ENCODE measurements at regions of chr2 and their contacts with region 1.

Region 1: DNA sequence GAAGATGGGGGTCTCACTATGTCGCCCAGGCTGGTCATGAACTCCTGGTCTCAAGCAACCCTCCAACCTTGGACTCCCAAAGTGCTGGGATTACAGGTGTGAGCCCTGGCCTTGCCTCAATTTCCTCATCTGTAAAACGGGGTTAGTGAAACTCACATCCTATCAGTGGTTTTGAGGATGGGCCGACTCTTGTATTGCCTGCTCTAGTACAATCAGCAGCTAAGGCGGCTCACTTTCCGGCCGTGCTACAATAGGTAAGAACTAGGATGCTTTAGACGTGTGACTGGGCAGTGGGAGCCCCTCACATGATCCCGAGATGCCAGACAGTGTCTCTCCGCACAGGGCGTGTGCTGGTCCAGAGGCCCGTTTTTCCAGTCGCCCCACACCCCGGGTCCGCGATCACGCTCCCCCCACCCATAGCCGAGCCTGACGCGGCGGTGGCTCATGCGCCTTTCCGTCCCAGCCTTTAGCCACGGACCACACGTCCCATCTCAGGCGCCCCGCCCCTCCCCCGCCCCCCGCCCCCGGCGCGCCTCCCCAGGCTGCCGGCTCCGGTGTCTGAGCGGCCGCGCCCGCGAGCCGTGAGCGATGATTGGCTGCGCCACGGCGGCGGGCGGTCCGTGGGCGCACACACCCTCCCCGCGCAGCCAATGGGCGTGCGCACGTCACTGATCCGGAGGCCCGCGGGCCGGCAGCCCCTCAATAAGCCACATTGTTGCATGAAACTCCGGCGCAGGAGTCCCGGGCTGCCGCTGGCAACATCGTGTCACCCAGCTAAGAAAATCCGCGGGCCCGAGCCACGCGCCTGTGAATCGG is at the start of gene HK2:
- DNase-seq: peak; percentile 85
- H3K4me3 Mint-ChIP-seq: peak within 1 kb of the TSS; percentile 96
- H3K27ac Mint-ChIP-seq: peak within 1 kb of the TSS; percentile 96
- H3K4me1 Mint-ChIP-seq: peaks cover 58% of the 10 kb centered on the region
- H3K27me3 Mint-ChIP-seq: peaks cover 3% of the 10 kb centered on the region
- total RNA-seq, gene HK2: 92.2 and 94.5 TPM in 2 replicates

Region 2: DNA sequence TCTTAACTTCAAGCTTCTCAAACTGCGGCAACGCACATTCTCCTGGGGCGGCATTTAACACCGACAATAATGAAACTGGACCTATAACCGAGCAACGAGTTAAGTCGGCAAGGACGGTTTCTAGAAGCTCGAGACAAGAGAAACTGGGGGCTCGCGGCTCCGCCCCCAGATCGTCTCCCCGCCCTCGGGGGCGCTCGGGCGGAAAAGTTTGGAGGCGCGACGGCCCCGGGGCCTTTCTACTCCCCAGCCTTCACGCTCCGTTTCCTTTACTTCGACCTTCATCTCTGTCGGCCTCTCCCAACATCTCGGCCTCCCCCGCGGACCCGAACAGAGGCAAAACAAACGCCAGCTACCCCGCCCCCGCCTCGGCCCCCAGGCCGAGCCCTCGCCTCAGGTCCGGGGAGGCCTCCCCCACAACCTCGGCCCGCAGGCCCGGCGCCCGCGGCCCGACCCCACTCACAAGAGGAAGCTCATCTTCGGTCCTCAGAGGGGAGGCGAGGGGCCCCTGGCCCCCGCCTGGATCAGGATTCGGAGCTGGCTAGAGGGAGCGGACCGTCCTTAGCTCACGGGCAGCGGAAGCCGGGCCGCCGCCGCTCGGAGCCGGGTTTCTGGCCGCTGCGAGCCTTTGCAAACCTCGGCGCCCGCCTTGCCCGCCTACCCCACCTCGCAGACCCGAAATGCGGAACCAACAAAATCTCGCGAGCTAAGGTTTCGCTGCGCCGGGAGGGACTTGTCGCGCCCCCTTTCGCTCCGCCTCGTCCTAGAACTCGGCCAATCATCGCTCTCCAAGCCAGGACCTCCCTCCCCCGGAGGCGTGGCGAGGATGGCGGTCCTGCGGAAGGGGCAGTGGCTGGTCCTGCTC is 655.2 kb before region 1 on chr2 and contains the start of gene MOB1A:
- intact Hi-C with region 1: loop called (anchors 10 kb)
- DNase-seq: peak; percentile 99
- H3K4me3 Mint-ChIP-seq: peak within 1 kb of the TSS; percentile 88
- H3K27ac Mint-ChIP-seq: peak within 1 kb of the TSS; percentile 85
- H3K4me1 Mint-ChIP-seq: peaks cover 40% of the 10 kb centered on the region
- H3K27me3 Mint-ChIP-seq: no peaks in the 10 kb centered on the region
- total RNA-seq, gene MOB1A: 207 and 221 TPM in 2 replicates

Region 3: DNA sequence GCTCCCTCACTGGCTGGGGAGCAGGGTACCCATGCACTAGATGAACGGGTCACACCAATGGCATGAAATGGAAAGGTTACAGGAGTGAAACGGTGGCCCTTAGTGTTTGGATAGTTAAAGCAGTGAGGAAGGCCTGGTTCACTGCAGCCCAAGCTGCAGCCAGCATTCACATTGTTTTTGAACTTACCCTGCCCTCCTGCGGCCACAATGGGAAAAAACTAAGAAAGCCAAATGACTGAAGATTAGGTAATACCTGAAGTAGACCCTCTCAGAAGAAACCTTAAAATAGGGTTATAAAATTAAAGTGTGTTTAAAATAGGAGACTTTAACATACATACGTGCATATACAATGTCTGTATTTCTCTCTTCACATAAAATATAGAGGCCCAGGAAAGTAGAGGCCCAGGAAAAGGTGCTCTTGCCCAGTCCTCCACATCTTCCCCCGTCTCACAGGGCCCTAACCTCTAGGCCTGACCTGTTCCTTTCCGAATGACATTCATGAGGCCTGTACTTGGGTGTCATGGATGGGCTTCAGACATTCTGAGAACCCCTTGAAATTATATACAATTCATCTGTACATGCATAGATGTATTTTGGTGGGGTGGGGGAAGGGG is 245.9 kb before region 1 on chr2:
- intact Hi-C with region 1: loop called (anchors 10 kb)
- DNase-seq: peak; percentile 56
- H3K4me3 Mint-ChIP-seq: no peak overlapping the region
- H3K27ac Mint-ChIP-seq: peak overlapping the region; percentile 12
- H3K4me1 Mint-ChIP-seq: peaks cover 37% of the 10 kb centered on the region
- H3K27me3 Mint-ChIP-seq: peaks cover 17% of the 10 kb centered on the region

Region 4: GRCh38 chr2:74632209-74632938 is 201.3 kb before region 1 on chr2:
- intact Hi-C with region 1: no loop called
- DNase-seq: no peak
- H3K4me3 Mint-ChIP-seq: no peak overlapping the region
- H3K27ac Mint-ChIP-seq: no peak overlapping the region
- H3K4me1 Mint-ChIP-seq: no peaks in the 10 kb centered on the region
- H3K27me3 Mint-ChIP-seq: peaks cover 25% of the 10 kb centered on the region

Region 5: GRCh38 chr2:74816540-74817303 is 16.9 kb before region 1 on chr2:
- intact Hi-C with region 1: no loop called
- DNase-seq: no peak
- H3K4me3 Mint-ChIP-seq: no peak overlapping the region
- H3K27ac Mint-ChIP-seq: no peak overlapping the region
- H3K4me1 Mint-ChIP-seq: no peaks in the 10 kb centered on the region
- H3K27me3 Mint-ChIP-seq: peaks cover 6% of the 10 kb centered on the region

Region 6: DNA sequence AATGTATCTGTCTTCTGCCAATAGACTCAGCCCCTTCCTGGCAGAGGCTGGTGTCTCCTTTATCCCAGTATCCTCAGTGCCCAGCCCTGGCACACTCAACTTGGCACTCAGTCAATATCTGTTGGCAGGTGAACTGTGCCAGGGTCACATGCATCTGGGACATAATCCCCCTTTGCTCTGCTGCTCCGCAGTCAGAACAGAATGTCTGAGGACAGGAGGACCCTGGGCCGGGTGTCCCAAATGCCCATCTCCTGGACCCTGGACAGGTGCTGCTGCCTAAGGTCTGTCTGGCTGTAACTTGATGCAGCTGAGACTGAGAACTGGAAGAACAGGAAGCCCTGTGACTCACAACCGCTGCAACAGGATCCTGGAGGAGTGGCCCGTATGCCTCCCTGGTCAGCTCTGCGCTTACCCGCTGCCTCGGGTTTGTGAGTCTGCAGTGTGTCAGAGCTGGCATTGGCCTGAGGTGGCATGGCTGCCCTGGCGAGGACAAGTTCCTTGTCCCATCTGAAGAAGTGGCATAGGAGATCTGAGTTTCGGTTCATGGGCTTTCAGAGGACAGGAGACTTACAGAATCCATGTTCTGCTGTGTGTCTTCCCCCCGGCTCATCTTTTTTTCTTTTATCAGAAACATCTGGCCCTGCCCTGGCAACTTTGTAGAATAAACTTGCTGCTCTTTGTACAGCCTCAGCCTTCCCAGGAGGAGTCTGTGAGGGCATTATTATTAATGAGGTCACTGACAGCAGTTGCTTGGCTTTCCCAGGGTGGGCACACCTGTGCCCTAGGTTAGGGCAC is 11.8 kb after region 1 on chr2:
- intact Hi-C with region 1: loop called (anchors 1 kb)
- DNase-seq: peak; percentile 26
- H3K4me3 Mint-ChIP-seq: peak overlapping the region; percentile 62
- H3K27ac Mint-ChIP-seq: peak overlapping the region; percentile 49
- H3K4me1 Mint-ChIP-seq: peaks cover 97% of the 10 kb centered on the region
- H3K27me3 Mint-ChIP-seq: no peaks in the 10 kb centered on the region

Region 7: DNA sequence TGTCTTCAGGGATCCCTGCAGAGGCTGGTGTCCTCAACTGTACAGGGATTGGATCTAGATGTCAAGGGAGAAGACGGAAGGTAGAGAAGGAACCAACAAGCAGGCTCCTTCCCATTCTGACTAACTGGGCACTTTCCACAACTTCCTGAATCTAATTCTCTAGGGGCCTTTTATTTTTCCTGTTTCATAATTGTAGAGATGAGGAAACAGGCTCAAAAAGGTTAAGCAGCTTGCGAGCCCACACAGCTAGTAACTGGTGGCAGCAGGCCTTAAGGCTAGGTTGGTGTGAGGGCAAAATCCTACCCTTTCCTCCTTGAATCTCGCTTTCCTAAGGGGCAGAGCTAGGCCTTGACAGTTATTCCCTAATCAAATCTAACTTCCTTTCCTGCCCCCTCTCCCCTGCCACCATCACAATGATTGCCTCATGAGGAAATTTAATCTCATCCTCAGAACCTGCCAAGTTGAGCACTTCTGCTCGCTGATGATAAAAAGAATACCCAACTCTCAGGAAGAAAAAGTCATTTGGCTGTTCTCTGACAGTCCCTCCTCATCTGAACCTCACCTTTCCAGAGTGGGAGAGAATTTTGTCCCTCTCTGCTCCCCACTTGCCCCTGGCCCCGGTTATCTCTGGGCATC is 89.1 kb after region 1 on chr2:
- intact Hi-C with region 1: no loop called
- DNase-seq: no peak
- H3K4me3 Mint-ChIP-seq: no peak overlapping the region
- H3K27ac Mint-ChIP-seq: no peak overlapping the region
- H3K4me1 Mint-ChIP-seq: peaks cover 4% of the 10 kb centered on the region
- H3K27me3 Mint-ChIP-seq: peaks cover 16% of the 10 kb centered on the region

Region 8: DNA sequence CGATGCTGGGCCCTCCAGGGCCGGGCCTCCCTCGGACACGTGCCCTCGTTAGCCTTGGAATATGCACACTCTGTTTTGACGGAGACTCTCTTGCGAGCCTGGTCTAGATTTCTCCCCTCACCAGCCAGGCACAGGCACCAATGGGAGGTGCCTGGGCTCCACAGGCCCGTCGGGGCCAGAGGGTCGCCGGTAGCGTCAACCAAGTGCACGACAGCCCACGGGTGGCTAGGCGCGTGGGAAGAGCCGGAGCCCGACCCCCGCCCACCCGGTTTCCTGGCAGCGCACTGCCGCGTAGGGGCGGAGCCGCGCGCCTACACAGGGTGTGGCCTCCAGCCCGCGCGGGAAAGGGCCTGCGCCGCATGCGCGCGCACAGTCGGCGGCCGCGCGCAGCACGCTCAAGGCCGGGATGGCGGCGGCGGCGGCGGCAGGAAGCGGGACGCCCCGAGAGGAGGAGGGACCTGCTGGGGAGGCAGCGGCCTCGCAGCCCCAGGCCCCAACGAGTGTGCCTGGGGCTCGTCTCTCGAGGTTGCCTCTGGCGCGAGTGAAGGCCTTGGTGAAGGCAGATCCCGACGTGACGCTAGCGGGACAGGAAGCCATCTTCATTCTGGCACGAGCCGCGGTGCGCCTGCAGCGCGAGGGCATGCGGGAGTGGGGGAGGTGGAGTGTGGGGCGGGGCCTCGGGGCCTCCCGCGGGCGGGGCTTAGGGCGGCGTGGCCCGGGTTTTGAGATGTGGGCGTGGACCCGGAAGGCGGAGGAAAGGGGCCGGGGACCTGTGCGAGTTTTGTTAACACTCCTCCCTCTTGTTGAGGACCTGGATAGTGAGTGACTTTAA is 124.9 kb after region 1 on chr2 and contains the start of gene POLE4:
- intact Hi-C with region 1: loop called (anchors 1 kb)
- DNase-seq: peak; percentile 89
- H3K4me3 Mint-ChIP-seq: peak within 1 kb of the TSS; percentile 85
- H3K27ac Mint-ChIP-seq: peak within 1 kb of the TSS; percentile 89
- H3K4me1 Mint-ChIP-seq: peaks cover 66% of the 10 kb centered on the region
- H3K27me3 Mint-ChIP-seq: no peaks in the 10 kb centered on the region
- total RNA-seq, gene POLE4: 48.4 and 56.7 TPM in 2 replicates

Measured in activated T-helper 1 cell treated with anti-CD3 and anti-CD28 coated beads, Interleukin-12 subunit alpha, Interleukin-12 subunit beta, Interleukin-2, Interleukin-4 antibody, amounts not matched to agents 30 ng/mL and 10 ng/mL and 1 ng/mL, durations not matched to agents 14 hours and 24 hours and 36 hours (primary cell).